ENCODE measurements at regions of chr7 and their contacts with region 1.

Region 1: DNA sequence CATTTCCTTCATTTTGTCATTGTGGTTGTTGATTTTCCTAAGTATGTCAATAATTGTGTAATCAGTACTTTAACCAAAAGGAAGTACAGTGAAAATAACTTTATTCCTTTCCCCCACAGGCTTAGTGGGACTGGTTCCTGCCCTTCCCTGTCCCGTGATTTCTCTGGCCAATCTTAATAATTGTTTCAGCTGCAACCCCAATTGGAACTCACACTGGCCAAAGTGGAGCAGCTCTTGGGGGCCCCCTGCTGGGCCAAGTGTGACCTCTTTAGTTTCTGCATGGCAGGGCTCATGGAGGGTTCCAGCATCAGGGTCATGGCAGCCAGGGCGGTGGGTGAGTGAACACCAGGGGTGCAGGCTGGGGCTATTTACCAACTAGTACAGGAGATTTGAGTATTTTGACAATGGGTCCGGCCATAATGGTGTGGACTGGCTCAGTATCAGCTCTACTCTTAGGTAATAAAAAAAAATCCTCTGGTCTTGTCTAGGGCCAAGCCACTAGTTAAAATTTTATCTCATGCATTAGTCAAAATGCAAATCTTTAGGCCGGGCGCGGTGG is 31.7 kb downstream of the CYCS start:
- DNase-seq: peak; percentile 30
- H3K4me3 ChIP-seq: no peak overlapping the region
- H3K27ac ChIP-seq: no peak overlapping the region
- H3K27me3 ChIP-seq: no peaks in the 10 kb centered on the region
- CTCF ChIP-seq: peak; percentile 92

Region 2: DNA sequence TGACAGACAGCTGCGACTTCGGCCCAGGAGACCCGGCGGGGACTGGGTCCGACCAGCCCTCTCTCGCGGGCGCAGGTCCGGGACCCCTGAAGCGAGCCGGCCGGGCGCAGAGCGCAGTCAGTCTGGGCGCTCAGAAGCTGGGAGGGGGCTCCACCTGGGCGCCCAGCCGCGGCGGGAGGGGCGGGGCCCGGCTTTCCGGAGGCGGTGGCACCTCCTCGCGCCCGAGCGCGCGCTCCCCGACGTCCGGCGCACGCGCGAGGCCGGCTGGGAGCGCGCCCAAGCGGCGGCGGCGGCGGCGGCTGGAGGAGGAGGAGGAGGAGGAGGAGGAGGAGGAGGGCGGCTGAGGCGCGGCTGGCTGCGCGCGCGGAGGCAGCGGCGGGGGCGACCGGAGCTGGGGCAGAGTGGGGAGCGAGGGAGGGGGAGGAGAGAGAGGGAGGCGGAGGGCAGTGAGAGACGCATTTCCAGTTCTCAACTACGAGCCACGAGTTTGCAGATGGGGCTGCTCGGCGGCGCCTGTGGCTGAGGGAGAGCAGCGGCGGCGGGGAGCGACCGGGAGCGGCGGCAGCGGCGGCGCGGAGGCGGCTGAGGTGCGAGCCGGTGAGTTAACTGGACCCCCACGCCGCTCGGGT is 520.2 kb before region 1 on chr7 and contains the start of gene PALS2:
- CTCF ChIA-PET with region 1: interaction called, 27 read pairs
- POLR2A ChIA-PET with region 1: no interaction called
- DNase-seq: no peak
- H3K4me3 ChIP-seq: peak within 1 kb of the TSS; percentile 74
- H3K27ac ChIP-seq: no peak within 1 kb of the TSS
- H3K27me3 ChIP-seq: peaks cover 18% of the 10 kb centered on the region
- CTCF ChIP-seq: no peak
- polyA plus RNA-seq, gene PALS2: 9.2 and 11.6 TPM in 2 replicates

Region 3: DNA sequence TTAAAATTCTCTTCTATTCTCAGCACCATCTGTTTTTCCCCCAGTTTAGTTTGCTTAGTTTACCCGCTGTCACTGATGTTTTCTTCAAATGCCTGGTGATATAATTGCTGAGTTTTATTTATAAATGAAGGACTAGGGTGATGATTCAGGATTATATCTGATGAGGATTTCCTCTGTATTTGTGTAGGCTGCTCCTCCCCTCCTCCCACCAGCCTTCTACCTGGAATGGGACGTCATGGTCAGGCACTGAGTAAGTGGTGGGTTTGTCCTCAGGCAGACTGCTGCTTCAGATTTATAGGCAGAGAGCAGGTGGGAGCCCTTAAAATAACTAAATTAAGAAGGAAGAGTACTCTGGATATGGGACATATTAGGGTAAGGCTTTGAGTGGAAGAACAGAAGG is 484.3 kb before region 1 on chr7:
- CTCF ChIA-PET with region 1: no interaction called
- POLR2A ChIA-PET with region 1: no interaction called
- DNase-seq: no peak
- H3K4me3 ChIP-seq: no peak overlapping the region
- H3K27ac ChIP-seq: no peak overlapping the region
- H3K27me3 ChIP-seq: no peaks in the 10 kb centered on the region
- CTCF ChIP-seq: no peak

Region 4: GRCh38 chr7:24773646-24774045 is 319.7 kb before region 1 on chr7:
- CTCF ChIA-PET with region 1: interaction called, 14 read pairs
- POLR2A ChIA-PET with region 1: no interaction called
- DNase-seq: no peak
- H3K4me3 ChIP-seq: no peak overlapping the region
- H3K27ac ChIP-seq: no peak overlapping the region
- H3K27me3 ChIP-seq: no peaks in the 10 kb centered on the region
- CTCF ChIP-seq: no peak

Region 5: GRCh38 chr7:24825931-24826661 is 267.3 kb before region 1 on chr7:
- CTCF ChIA-PET with region 1: interaction called, 93 read pairs
- POLR2A ChIA-PET with region 1: interaction called, 3 read pairs
- DNase-seq: no peak
- H3K4me3 ChIP-seq: no peak overlapping the region
- H3K27ac ChIP-seq: peak overlapping the region; percentile 34
- H3K27me3 ChIP-seq: no peaks in the 10 kb centered on the region
- CTCF ChIP-seq: no peak

Region 6: GRCh38 chr7:24979863-24980533 is 113.3 kb before region 1 on chr7 and contains the start of gene OSBPL3:
- CTCF ChIA-PET with region 1: interaction called, 24 read pairs
- POLR2A ChIA-PET with region 1: no interaction called
- DNase-seq: peak; percentile 91
- H3K4me3 ChIP-seq: peak within 1 kb of the TSS; percentile 79
- H3K27ac ChIP-seq: peak within 1 kb of the TSS; percentile 91
- H3K27me3 ChIP-seq: no peaks in the 10 kb centered on the region
- CTCF ChIP-seq: no peak
- polyA plus RNA-seq, gene OSBPL3: 33.3 and 37.8 TPM in 2 replicates

Region 7: GRCh38 chr7:25125137-25125946 is 32.0 kb after region 1 on chr7 and contains the start of gene CYCS:
- CTCF ChIA-PET with region 1: interaction called, 13 read pairs
- POLR2A ChIA-PET with region 1: no interaction called
- DNase-seq: peak; percentile 100
- H3K4me3 ChIP-seq: peak within 1 kb of the TSS; percentile 98
- H3K27ac ChIP-seq: peak within 1 kb of the TSS; percentile 77
- H3K27me3 ChIP-seq: peaks cover 3% of the 10 kb centered on the region
- CTCF ChIP-seq: no peak
- polyA plus RNA-seq, gene CYCS: 63.1 and 74.1 TPM in 2 replicates